IMR-90 (cell line): ENCODE measurements at regions of chr1 and their contacts with region 1.

Region 1: GRCh38 chr1:156082309-156083091 is at the start of gene MEX3A:
- DNase-seq: peak; percentile 64
- ATAC-seq: peak; percentile 67
- H3K4me3 ChIP-seq: peak within 1 kb of the TSS; percentile 71
- H3K27ac ChIP-seq: peak within 1 kb of the TSS; percentile 91
- H3K4me1 ChIP-seq: peaks cover 17% of the 10 kb centered on the region
- H3K27me3 ChIP-seq: no peaks in the 10 kb centered on the region
- CTCF ChIP-seq: no peak
- POLR2A ChIP-seq: no peak
- RAD21 ChIP-seq: no peak
- total RNA-seq, gene MEX3A: 2.3 and 2.5 TPM in 2 replicates

Region 2: GRCh38 chr1:156054500-156055280 is 27.8 kb before region 1 on chr1 and contains the start of gene LAMTOR2:
- CTCF ChIA-PET with region 1: no interaction called
- POLR2A ChIA-PET with region 1: no interaction called
- dilution Hi-C with region 1: no loop called
- in situ Hi-C with region 1: no loop called
- intact Hi-C with region 1: loop called (anchors 1 kb)
- DNase-seq: peak; percentile 94
- ATAC-seq: peak; percentile 81
- H3K4me3 ChIP-seq: peak within 1 kb of the TSS; percentile 83
- H3K27ac ChIP-seq: peak within 1 kb of the TSS; percentile 90
- H3K4me1 ChIP-seq: peaks cover 4% of the 10 kb centered on the region; the same call in 1 of the 2 replicates
- H3K27me3 ChIP-seq: no peaks in the 10 kb centered on the region
- CTCF ChIP-seq: no peak
- POLR2A ChIP-seq: peak; percentile 49
- RAD21 ChIP-seq: no peak
- total RNA-seq, gene LAMTOR2: 45.8 and 50.0 TPM in 2 replicates

Region 3: DNA sequence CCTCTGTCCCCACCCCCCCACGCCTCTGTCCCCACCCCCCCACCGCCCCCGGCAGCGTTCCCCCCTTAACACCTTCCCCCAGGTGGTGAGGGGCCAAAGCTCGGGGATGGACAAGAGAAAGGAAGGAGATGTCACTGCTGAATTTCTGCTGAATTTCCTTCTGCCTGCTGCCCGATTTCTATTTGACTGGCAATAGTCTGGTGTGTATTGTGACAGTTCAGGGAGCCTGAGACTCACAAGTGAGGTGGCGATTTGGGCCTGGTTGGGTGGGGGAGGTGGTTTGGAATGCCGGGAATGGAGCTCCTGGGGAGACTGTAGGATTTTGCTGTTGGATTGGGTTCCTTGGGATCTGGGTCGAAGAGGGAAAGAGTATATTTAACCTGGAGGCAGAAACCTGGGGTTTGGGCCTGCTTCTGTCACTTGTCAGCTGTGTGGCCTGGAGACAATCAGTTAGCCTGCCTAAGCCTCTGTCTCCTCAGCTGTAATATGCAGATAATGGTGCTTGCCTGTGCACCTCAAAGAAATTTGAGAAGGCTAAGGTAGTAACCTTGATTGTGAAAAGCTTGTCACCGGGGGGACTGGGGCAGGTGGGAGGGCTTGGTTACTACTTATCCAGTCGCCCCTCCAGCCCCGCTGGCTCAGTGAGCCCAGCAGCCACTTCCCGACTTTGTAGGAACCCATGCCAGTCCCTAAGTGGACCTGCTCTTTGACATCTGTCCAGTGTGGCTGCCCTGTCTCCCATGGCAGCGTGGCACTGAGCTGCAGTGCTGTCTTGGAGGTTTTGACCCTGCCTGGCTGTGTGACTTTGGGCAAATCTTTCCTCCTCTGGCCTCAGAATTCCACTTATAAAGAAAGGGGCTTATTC is 24.4 kb after region 1 on chr1:
- CTCF ChIA-PET with region 1: no interaction called
- POLR2A ChIA-PET with region 1: interaction called, 13 read pairs
- dilution Hi-C with region 1: no loop called
- in situ Hi-C with region 1: no loop called
- intact Hi-C with region 1: no loop called
- DNase-seq: peak; percentile 40
- ATAC-seq: peak; percentile 15
- H3K4me3 ChIP-seq: peak overlapping the region; percentile 14; the same call in 1 of the 2 replicates
- H3K27ac ChIP-seq: peak overlapping the region; percentile 35
- H3K4me1 ChIP-seq: peaks cover 45% of the 10 kb centered on the region
- H3K27me3 ChIP-seq: no peaks in the 10 kb centered on the region
- CTCF ChIP-seq: no peak
- POLR2A ChIP-seq: no peak
- RAD21 ChIP-seq: no peak

Region 4: GRCh38 chr1:156445789-156446263 is 363.3 kb after region 1 on chr1:
- CTCF ChIA-PET with region 1: no interaction called
- POLR2A ChIA-PET with region 1: no interaction called
- dilution Hi-C with region 1: no loop called
- in situ Hi-C with region 1: no loop called
- intact Hi-C with region 1: no loop called
- DNase-seq: peak; percentile 69
- ATAC-seq: peak; percentile 100
- H3K4me3 ChIP-seq: no peak overlapping the region
- H3K27ac ChIP-seq: no peak overlapping the region
- H3K4me1 ChIP-seq: no peaks in the 10 kb centered on the region
- H3K27me3 ChIP-seq: peaks cover 62% of the 10 kb centered on the region
- CTCF ChIP-seq: peak; percentile 96
- POLR2A ChIP-seq: no peak
- RAD21 ChIP-seq: peak; percentile 95

Region 5: DNA sequence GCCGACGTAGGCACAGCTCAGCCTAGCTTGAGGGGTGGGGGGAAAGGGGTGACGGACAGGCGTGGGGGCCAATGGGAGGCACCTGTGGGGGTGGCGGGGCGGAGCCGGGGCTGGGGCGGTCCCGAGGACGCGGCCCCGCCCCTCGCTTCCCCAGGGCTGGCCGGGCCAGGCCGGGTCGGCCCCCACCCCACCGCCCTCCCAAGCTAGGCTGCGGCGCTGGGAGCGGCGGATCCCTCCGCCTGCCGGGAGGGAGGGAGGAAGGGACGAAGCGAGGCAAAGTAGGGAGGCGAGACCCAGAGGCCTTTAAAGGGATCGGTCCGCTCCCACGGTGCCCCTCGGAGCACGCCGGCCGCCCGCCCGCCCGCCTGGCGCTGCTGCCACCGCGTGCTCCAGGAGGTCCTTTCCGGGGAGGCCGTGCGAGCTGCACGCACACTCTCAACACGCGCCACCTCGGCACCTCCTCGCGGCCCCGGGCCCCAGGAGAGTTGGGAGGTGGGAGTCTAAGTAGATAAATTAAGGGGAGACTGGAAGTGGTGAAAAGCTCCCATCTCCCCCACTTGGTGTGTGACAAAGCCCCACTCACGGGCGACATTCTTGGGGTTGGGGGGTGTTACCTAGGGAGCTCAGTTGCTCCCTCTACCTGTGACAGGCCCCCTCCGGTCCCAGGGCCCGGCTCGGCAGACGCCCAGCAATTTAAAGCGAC is 418.4 kb after region 1 on chr1:
- CTCF ChIA-PET with region 1: no interaction called
- POLR2A ChIA-PET with region 1: no interaction called
- dilution Hi-C with region 1: no loop called
- in situ Hi-C with region 1: no loop called
- intact Hi-C with region 1: no loop called
- DNase-seq: peak; percentile 96
- ATAC-seq: peak; percentile 80
- H3K4me3 ChIP-seq: peak overlapping the region; percentile 92
- H3K27ac ChIP-seq: peak overlapping the region; percentile 96
- H3K4me1 ChIP-seq: peaks cover 51% of the 10 kb centered on the region
- H3K27me3 ChIP-seq: no peaks in the 10 kb centered on the region
- CTCF ChIP-seq: peak; percentile 51
- POLR2A ChIP-seq: peak; percentile 86; the same call in 1 of the 2 replicates
- RAD21 ChIP-seq: peak; percentile 36